Endothelial cell of umbilical vein (primary cell): ENCODE measurements at regions of chr2 and their contacts with region 1.

Region 1: DNA sequence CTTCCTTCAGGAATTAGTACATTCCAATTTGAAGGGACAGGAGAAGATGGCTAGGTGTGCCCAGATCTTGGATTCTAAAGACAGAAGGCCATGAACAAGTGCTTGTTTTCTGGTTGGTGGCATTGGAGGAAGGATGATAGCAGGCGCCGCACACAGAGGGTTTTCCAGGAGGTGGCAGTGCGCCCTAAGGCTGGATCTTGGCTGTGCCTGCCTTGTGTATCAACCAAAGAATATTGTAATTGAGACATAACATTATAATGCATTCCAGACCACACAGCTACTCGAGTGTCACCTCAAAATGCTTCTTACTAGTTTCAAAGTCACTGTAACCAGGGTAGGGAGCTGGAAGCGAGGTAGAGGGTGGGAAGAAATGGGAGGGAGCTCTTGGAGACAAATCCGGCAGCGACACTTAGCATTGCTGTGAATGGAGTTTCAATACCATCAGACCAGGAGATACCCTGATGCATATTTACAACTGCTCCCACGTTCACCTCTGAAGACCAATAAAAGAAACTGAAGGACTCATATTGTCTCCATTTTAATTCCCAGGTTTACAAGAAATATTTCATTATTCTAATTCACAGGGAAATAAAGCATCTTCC is 42.5 kb downstream of the CPO start:
- DNase-seq: peak; percentile 79
- H3K4me3 ChIP-seq: no peak overlapping the region
- H3K27ac ChIP-seq: no peak overlapping the region
- H3K4me1 ChIP-seq: no peaks in the 10 kb centered on the region
- H3K27me3 ChIP-seq: peaks cover 0 to 5% of the 10 kb centered on the region in 2 experiments
- CTCF ChIP-seq: peak; percentile 83 to 88
- POLR2A ChIP-seq: no peak

Region 2: DNA sequence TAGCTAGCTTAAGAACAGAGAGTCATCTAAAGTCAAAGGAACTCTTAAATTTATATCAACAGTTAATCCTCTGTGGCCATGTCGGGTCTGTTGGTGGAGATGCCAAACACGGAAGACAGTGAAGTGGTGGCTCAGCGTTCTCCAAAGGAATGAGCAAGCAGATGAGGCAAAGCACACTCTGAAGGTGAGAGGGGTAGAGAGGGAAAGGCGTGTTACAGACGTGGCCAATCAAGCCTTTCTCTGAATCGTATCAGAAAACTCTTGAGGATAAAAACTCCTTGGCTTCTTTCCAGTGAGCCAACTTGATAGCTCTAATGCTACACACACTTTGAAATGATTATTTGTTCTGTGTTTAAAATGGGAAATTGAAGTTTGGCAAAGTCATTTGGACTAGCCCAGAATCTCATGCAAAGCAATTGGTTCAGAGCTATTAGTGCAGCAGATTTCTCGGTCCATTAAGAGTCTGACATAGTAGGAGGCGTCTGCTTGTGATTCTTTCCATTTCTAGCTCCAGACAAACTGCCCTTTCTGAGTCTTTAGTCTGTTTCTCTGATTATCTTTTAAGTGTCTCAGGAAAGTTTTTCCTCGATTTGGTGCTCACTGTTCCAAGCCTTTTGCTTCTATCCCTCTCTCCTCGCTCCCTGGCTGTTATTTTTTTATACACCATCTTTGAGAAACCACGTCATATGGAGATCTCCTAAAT is 100.0 kb before region 1 on chr2:
- CTCF ChIA-PET with region 1: no interaction called
- POLR2A ChIA-PET with region 1: no interaction called
- dilution Hi-C with region 1: no loop called
- intact Hi-C with region 1: no loop called
- DNase-seq: no peak
- H3K4me3 ChIP-seq: no peak overlapping the region
- H3K27ac ChIP-seq: no peak overlapping the region
- H3K4me1 ChIP-seq: no peaks in the 10 kb centered on the region
- H3K27me3 ChIP-seq: peaks cover 0 to under 1% of the 10 kb centered on the region in 2 experiments
- CTCF ChIP-seq: no peak
- POLR2A ChIP-seq: no peak

Region 3: DNA sequence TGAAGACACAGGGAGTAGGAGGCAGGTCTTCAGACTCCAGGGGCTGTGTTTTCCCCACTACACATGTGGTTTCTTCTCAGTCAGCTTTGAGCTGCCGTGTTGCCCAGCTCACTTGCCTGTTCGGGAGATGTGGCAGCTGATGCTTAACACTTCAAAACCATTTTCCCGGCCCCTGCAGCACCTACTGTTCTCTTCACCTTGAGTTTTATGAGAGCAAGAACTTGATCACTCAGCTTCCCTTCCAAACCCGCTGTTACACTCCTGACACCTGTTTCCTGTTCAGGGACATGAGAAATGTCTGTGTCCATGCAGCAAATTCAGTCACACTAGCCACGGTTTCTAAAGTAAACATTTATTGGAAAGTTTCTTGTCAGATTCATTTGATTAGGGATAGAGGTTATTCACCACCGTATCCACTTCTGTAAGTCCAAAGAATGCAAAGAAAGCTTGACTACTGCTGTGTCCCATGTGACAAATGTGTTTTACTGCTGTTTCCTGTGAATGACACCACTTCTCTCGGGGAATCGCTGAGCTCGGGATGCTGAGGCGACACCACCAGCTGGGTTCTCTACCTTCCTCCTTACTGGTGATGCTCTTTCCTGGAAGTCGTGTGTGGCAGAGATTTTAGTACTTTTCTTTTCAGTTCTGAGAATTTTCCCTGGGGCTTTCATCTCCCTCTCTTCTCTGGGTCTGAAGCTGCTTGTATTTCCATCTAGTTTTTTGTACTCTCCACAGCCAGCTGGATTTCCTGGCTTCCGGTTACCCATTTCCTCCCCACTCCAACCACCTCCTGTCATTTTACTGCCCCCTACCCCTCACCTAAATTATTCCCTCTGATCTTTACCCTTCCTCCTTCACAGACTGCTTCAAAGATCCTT is 92.2 kb after region 1 on chr2:
- CTCF ChIA-PET with region 1: interaction called, 8 read pairs
- POLR2A ChIA-PET with region 1: no interaction called
- dilution Hi-C with region 1: no loop called
- intact Hi-C with region 1: loop called (anchors 1 kb)
- DNase-seq: peak; percentile 70
- H3K4me3 ChIP-seq: peak overlapping the region in 2 of 3 experiments; percentile 2 to 12
- H3K27ac ChIP-seq: peak overlapping the region; percentile 22
- H3K4me1 ChIP-seq: peaks cover 23% of the 10 kb centered on the region
- H3K27me3 ChIP-seq: no peaks in the 10 kb centered on the region
- CTCF ChIP-seq: no peak
- POLR2A ChIP-seq: peak; percentile 63

Region 4: GRCh38 chr2:208072250-208072892 is 1090.5 kb after region 1 on chr2:
- CTCF ChIA-PET with region 1: no interaction called
- POLR2A ChIA-PET with region 1: no interaction called
- dilution Hi-C with region 1: no loop called
- intact Hi-C with region 1: loop called (anchors 5 kb)
- DNase-seq: peak; percentile 77
- H3K4me3 ChIP-seq: no peak overlapping the region
- H3K27ac ChIP-seq: no peak overlapping the region
- H3K4me1 ChIP-seq: no peaks in the 10 kb centered on the region
- H3K27me3 ChIP-seq: peaks cover 3 to 8% of the 10 kb centered on the region in 2 experiments
- CTCF ChIP-seq: peak; percentile 80 to 84
- POLR2A ChIP-seq: no peak